WTC11 (cell line): ENCODE measurements at regions of chr19 and their contacts with region 1.

Region 1: DNA sequence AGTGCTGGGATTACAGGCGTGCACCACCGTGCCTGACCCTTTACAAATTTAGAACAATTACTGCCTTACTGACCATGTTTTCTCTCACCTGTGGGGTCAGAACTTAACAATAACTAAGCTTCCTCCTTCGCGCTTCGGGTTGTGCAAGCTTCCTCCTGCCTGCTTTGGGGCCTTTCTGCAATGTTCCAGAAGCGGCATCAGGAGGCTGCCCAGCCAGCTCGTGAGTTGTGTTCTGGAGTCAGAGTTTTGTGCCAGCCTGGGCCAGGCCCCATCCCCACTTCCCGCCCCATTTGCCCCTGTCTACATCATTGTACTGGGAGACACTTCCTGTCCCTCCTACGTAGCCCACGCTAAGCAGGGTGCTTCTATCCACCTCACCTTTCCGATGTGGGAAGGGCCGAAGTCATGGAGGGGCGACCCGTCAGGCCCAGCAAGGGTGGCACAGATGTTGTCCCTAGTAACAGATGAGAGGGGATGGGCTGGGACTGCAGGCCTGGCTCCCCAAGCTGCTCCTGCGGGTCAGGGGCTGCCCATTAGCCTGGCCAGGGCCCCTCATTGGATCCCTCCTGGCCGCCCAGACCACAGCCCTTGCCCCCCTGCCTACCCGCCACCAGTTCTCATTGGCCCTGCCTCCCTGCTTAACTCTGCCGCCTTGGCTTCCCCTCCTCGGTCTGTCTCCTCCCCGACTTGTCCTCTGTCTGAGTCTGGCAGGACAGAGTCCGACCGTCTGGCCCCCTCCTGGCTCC is 13.4 kb downstream of the UHRF1 start:
- DNase-seq: no peak
- ATAC-seq: no peak
- H3K4me3 Mint-ChIP-seq: no peak overlapping the region
- H3K27ac Mint-ChIP-seq: no peak overlapping the region
- H3K4me1 Mint-ChIP-seq: peaks cover 4% of the 10 kb centered on the region
- H3K27me3 Mint-ChIP-seq: no peaks in the 10 kb centered on the region
- CTCF ChIP-seq: no peak

Region 2: GRCh38 chr19:4744451-4745174 is 178.1 kb before region 1 on chr19:
- CTCF ChIA-PET with region 1: no interaction called
- POLR2A ChIA-PET with region 1: no interaction called
- DNase-seq: no peak
- ATAC-seq: no peak
- H3K4me3 Mint-ChIP-seq: no peak overlapping the region
- H3K27ac Mint-ChIP-seq: no peak overlapping the region
- H3K4me1 Mint-ChIP-seq: peaks cover 12% of the 10 kb centered on the region
- H3K27me3 Mint-ChIP-seq: peaks cover 3% of the 10 kb centered on the region; the same call in 1 of the 2 replicates
- CTCF ChIP-seq: no peak

Region 3: DNA sequence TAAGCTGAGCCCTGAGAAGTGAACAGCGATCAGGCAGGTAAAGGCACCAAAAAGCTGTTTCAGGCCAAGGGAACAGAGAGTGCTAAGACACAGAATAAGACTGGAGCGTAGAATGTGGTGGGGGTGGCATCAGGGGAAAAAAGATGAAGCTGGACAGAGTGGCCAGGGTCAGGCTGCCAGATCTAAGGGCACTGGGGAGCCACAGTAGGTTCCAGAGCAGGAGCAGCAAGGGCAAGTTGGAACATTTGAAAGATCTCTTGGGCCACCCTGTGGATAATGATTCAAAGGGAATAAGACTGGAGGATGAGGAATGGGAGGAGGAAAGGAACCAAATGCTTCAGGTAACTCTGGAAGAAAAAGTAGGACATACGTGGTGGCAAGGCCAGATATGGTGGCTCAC is 48.8 kb before region 1 on chr19:
- CTCF ChIA-PET with region 1: interaction called, 11 read pairs
- POLR2A ChIA-PET with region 1: no interaction called
- DNase-seq: no peak
- ATAC-seq: no peak
- H3K4me3 Mint-ChIP-seq: no peak overlapping the region
- H3K27ac Mint-ChIP-seq: peak overlapping the region; percentile 26; the same call in 1 of the 2 replicates
- H3K4me1 Mint-ChIP-seq: peaks cover 9% of the 10 kb centered on the region; the same call in 1 of the 2 replicates
- H3K27me3 Mint-ChIP-seq: no peaks in the 10 kb centered on the region; the same call in 1 of the 2 replicates
- CTCF ChIP-seq: no peak